AG04449 (cell line): ENCODE measurements at regions of chr4 and their contacts with region 1.

Region 1: GRCh38 chr4:185640811-185641675 is 105.7 kb upstream of the PDLIM3 start:
- DNase-seq: peak; percentile 57
- H3K4me3 ChIP-seq: no peak overlapping the region
- CTCF ChIP-seq: peak; percentile 15

Region 2: GRCh38 chr4:184968784-184969201 is 672.2 kb before region 1 on chr4:
- CTCF ChIA-PET with region 1: no interaction called
- POLR2A ChIA-PET with region 1: no interaction called
- DNase-seq: no peak
- H3K4me3 ChIP-seq: no peak overlapping the region
- CTCF ChIP-seq: no peak

Region 3: DNA sequence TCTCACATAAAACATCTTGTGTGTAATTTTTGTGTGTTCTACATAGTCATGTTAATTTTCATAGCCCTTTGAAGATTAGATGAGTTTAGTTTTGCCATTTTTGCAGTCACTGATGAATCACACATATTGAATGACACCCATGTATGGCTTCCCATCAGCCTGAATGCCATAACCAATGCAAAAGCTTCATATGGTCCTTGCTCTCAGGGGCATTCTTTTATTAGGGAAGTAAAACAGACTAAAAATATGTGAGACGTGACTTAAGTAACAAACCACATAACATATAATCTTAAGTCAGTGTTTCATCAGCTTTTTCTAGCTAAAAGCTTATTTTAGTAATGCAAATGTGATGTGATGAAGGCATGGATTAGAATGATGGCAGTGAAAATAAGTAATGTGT is 489.7 kb before region 1 on chr4:
- CTCF ChIA-PET with region 1: no interaction called
- POLR2A ChIA-PET with region 1: no interaction called
- DNase-seq: no peak
- H3K4me3 ChIP-seq: no peak overlapping the region
- CTCF ChIP-seq: no peak

Region 4: GRCh38 chr4:185625503-185625902 is 15.5 kb before region 1 on chr4:
- CTCF ChIA-PET with region 1: interaction called, 12 read pairs
- POLR2A ChIA-PET with region 1: no interaction called
- DNase-seq: no peak
- H3K4me3 ChIP-seq: no peak overlapping the region
- CTCF ChIP-seq: no peak

Region 5: GRCh38 chr4:185656467-185656931 is 15.5 kb after region 1 on chr4:
- CTCF ChIA-PET with region 1: interaction called, 12 read pairs
- POLR2A ChIA-PET with region 1: no interaction called
- DNase-seq: no peak
- H3K4me3 ChIP-seq: no peak overlapping the region
- CTCF ChIP-seq: peak; percentile 34

Region 6: GRCh38 chr4:186021461-186022167 is 380.6 kb after region 1 on chr4:
- CTCF ChIA-PET with region 1: interaction called, 155 read pairs
- POLR2A ChIA-PET with region 1: no interaction called
- DNase-seq: no peak
- H3K4me3 ChIP-seq: no peak overlapping the region
- CTCF ChIP-seq: peak; percentile 76